Psoas muscle (tissue), 8 donors: ENCODE measurements at regions of chr2 and their contacts with region 1.

Region 1: GRCh38 chr2:190382851-190383250 is 25.3 kb upstream of the MFSD6 start:
- DNase-seq: no peak
- ATAC-seq: no peak
- H3K4me3 ChIP-seq: no peak overlapping the region
- H3K27ac ChIP-seq: no peak overlapping the region
- H3K4me1 ChIP-seq: no peaks in the 10 kb centered on the region
- H3K27me3 ChIP-seq: no peaks in the 10 kb centered on the region
- CTCF ChIP-seq: peak; percentile 43

Region 2: GRCh38 chr2:190511104-190511503 is 128.3 kb after region 1 on chr2:
- intact Hi-C with region 1: loop called (anchors 10 kb)
- DNase-seq: no peak
- ATAC-seq: no peak
- H3K4me3 ChIP-seq: no peak overlapping the region
- H3K27ac ChIP-seq: no peak overlapping the region
- H3K4me1 ChIP-seq: no peaks in the 10 kb centered on the region
- H3K27me3 ChIP-seq: no peaks in the 10 kb centered on the region
- CTCF ChIP-seq: peak; percentile 48

Region 3: GRCh38 chr2:190804182-190804795 is 421.4 kb after region 1 on chr2:
- intact Hi-C with region 1: loop called in 1 of 2 experiments (anchors 10 kb)
- DNase-seq: no peak
- ATAC-seq: no peak
- H3K4me3 ChIP-seq: no peak overlapping the region
- H3K27ac ChIP-seq: no peak overlapping the region
- H3K4me1 ChIP-seq: no peaks in the 10 kb centered on the region
- H3K27me3 ChIP-seq: no peaks in the 10 kb centered on the region
- CTCF ChIP-seq: peak; percentile 63

Region 4: DNA sequence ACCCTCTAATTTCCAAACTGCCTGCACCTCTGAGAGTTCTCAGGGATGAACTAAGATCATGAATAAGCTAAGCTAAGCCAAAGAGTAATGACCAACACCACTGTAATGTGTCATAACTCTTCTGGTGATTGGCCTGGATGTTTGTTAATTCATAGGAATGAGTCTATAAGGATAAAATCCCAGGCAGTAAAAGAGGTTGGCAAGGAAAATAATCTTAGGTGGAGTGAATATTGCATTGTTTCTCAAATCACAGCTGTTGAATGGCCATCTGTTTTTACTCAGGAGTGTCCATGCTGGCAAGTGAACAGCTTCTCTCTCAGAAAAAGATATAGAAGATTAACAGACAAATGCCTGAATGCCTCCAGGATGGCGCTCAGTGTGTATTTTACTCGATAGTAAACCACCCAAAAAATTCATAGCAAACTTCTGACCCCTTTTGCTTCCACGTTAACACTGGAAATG is 437.0 kb after region 1 on chr2:
- intact Hi-C with region 1: loop called in 1 of 2 experiments (anchors 10 kb)
- DNase-seq: no peak
- ATAC-seq: no peak
- H3K4me3 ChIP-seq: no peak overlapping the region
- H3K27ac ChIP-seq: no peak overlapping the region
- H3K4me1 ChIP-seq: no peaks in the 10 kb centered on the region
- H3K27me3 ChIP-seq: no peaks in the 10 kb centered on the region
- CTCF ChIP-seq: no peak